Lower leg skin (tissue), 4 donors: ENCODE measurements at regions of chr5 and their contacts with region 1.

Region 1: DNA sequence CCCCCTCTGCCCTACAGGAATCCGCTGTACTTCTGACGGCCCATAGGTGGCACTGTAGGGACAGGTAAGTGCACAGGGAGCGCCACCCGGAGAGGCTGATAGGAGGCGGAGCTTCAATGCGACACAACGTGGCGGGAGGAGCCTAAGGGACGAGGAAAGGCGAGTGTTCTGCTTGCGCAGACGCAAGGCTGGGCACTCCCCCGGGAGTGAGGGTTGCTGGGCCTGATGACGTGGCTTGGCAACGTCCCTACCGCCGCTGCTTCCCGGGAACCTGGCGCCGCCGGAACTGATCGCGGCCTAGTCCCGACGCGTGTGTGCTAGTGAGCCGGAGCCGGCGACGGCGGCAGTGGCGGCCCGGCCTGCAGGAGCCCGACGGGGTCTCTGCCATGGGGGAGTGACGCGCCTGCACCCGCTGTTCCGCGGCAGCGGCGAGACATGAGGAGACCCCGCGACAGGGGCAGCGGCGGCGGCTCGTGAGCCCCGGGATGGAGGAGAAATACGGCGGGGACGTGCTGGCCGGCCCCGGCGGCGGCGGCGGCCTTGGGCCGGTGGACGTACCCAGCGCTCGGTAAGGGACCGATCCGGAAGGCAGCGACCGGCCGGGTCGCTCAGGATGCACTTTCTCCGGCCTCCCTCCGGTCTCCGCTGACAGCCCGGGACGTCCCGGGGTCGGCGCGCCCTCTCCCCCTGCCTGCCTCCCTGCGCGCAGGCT is at the start of gene SLC30A5:
- DNase-seq: peak; percentile 99
- H3K4me3 ChIP-seq: peak within 1 kb of the TSS; percentile 84
- CTCF ChIP-seq: peak in 1 of 3 donors; percentile 88
- POLR2A ChIP-seq: no peak
- total RNA-seq, gene SLC30A5: 24.5 to 56.8 (median 43.2) TPM

Region 2: DNA sequence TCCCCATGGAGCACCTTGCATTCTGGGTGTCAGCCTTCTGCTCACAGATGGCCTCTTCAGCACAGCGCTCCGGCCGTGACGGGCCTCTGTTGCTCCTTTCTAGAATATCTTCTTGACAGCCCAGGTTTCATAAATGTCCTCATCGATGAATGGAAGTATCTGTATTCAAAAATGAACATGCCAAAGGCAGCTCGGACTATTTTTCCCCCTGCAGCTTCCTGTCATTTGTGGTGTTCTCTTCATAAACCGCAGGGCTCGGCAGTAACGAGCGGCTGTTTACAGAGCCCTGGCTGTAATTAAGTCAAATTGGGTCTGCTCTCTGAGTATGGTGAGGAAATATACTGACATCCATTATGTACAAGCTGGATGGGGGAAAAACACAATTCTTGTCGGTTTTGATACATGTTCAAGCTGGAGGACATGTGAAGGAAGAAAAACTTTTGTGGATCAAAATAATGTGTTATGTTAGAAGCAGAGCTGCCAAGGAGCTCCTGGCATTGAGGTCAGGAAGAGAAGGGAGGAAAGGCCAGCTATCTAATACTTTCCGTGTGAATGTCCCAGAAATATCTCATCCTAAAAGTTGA is 1743.2 kb before region 1 on chr5:
- intact Hi-C with region 1: no loop called
- DNase-seq: peak in 1 of 2 donors; percentile 42
- H3K4me3 ChIP-seq: no peak overlapping the region
- CTCF ChIP-seq: no peak
- POLR2A ChIP-seq: no peak

Region 3: GRCh38 chr5:69234457-69235268 is 140.7 kb after region 1 on chr5 and contains the start of gene CDK7:
- intact Hi-C with region 1: loop called (anchors 10 kb)
- DNase-seq: peak; percentile 95 to 99
- H3K4me3 ChIP-seq: peak within 1 kb of the TSS; percentile 92
- CTCF ChIP-seq: no peak
- POLR2A ChIP-seq: no peak
- total RNA-seq, gene CDK7: 29.4 to 67.6 (median 35.7) TPM

Region 4: DNA sequence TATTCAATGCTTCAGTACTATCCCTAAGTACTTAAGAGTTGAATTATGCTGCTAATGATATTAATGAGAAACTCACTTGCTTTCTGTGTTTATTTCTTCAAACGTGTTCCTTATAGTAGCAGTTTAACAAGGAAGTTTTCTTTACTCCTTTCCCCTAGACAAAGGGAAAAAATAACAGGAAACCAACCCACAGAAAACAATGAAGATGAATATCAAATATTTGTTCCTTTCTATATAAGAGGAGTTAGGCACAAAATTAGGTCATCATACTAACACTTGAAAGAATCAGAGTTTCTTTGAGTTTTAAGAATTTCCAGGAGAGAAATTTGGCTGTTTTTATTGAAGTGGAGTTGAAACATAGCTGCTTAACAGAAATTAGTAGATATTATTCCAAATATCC is 383.2 kb after region 1 on chr5:
- intact Hi-C with region 1: no loop called
- DNase-seq: no peak
- H3K4me3 ChIP-seq: no peak overlapping the region
- CTCF ChIP-seq: no peak
- POLR2A ChIP-seq: no peak